Motor neuron (in vitro differentiated cells): ENCODE measurements at regions of chr12 and their contacts with region 1.

Region 1: DNA sequence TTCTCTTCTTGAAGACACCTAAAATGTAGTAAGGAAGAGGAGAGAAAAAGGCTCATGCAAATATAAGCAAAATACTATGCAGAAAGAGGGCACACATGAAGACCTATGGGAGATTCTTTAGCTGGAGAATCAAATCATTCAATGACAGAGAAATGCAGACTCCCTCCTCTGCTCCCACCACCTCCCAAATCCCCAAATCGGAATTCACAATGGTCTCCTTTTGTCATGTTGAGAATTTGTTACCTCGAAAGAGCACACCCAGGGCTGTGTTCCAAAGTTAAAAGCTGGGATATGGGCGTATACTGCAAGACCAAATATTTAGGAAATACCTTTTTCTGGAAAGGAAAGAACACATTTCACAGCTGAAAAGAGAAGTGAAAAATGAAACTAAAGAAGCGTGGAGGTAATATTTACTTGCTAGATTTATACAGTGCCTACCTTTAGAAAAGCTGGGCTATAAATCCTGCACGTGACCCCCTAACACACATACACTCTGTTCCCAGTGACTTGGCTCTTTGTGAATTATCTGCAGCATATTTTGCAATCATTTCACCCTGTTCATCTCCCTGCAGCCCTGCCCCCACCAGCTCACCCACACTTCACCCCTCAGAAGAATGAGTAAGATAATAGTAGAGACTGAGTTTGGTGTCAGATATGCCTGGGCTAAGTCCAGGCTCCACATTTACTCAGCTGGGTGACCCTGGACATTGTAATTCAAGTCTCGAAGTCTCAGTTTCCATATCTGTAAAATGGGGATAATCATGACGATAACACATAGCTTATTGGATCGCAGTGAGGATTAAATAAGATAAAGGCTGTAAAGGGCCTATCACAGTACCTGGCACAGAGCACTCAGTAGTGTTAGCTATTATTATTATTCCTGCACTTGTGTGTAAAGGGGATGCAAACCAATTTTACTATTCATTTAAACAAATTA is 2.9 kb upstream of the CACNA1C start:
- ATAC-seq: no peak
- H3K4me3 ChIP-seq: no peak overlapping the region
- H3K27ac ChIP-seq: no peak overlapping the region
- H3K4me1 ChIP-seq: peaks cover 0 to 4% of the 10 kb centered on the region in 2 donors

Region 2: DNA sequence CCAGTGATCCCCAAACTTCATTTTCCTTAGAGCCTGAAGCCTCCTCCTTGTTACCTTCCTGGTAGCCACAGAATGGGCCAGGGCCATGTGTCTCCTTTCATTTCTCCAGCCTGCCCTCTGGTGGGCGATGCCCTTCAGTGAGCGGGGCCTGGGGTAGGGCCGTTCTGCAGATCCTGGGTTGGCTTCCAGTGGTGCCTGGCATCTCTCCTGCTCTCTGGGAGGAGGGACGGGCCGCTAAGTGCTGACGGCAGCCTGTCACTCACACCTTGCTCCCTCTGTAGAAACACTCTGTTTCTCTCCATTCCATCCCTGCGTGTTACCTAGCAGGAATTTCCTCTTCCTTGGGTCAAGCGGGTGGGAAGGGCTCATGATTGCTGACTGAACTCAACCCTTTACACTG is 235.0 kb after region 1 on chr12:
- in situ Hi-C with region 1: loop called in 1 of 9 experiments (anchors 10 kb)
- ATAC-seq: peak; percentile 77 to 99 (median 97)
- H3K4me3 ChIP-seq: no peak overlapping the region
- H3K27ac ChIP-seq: no peak overlapping the region
- H3K4me1 ChIP-seq: no peaks in the 10 kb centered on the region